B cell (primary cell): ENCODE measurements at regions of chr4 and their contacts with region 1.

Region 1: DNA sequence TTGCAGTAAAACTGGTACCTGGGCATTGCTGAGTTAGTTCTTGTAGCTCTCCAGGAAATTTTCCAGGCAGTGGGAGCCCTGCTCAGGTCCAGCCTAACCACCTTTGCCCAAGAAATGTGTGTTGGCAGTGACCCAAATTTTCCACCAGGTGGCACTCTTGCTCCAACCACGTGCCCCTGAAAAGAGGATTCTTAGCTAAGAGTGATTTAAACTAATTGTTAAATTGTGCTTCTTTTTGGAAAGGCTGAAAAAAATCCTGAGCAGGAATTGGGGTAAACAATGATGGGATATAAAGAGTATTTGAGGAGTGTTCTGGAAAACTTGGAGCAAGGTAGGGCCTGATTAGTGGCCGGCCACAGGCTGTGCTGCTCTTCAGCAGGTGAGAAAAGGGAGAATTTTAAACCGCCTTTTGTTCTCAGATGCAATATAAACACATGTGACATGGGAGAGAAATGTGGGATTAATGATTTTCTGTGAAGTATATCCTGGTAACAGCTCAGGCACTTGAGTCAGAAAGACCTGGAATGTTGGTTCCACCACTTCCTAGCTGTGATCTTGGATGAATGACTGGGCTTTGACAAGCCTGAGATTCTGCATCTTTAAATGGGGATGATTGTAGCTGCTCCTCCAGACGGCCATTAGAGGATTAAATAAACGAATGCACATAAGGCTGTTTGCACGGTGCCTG is 219.6 kb downstream of the PTTG2 start:
- DNase-seq: peak; percentile 79
- ATAC-seq: peak; percentile 80
- H3K4me3 ChIP-seq: no peak overlapping the region
- H3K4me3 Mint-ChIP-seq: no peak overlapping the region
- H3K27ac ChIP-seq: no peak overlapping the region
- H3K27ac Mint-ChIP-seq: no peak overlapping the region
- H3K4me1 ChIP-seq: peaks cover 24 to 31% of the 10 kb centered on the region in 2 donors
- H3K4me1 Mint-ChIP-seq: peaks cover 29% of the 10 kb centered on the region
- H3K27me3 ChIP-seq: peaks cover 0 to 6% (median 1%) of the 10 kb centered on the region in 4 experiments
- H3K27me3 Mint-ChIP-seq: peaks cover 6% of the 10 kb centered on the region
- CTCF ChIP-seq: peak; percentile 99

Region 2: DNA sequence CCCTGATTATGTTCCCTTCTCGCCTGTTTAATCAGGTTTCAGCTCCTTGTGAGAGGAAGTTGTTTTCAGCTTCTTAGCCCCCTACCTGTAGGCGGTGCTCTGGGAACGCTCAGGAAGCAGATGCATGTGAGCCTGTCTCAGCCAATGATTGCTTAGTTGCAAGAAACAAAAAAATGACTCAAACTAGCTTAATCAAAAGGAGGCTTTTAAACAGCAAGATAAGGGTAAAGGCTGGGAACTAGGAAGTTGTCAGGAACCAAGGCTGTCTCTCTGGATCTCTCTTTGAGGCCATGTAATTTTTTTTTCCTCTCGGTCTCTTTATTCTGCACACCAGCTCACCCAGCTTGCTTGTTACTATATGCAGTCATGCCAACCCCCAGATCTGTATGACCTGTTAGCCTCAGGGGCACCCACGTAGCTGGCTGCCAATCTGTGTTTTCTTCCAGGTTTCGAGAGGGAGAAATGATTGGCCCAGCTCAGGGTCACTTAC is 110.5 kb before region 1 on chr4:
- CTCF ChIA-PET with region 1: interaction called, 16 read pairs
- POLR2A ChIA-PET with region 1: no interaction called
- intact Hi-C with region 1: no loop called
- DNase-seq: peak; percentile 30
- ATAC-seq: no peak
- H3K4me3 ChIP-seq: no peak overlapping the region
- H3K4me3 Mint-ChIP-seq: no peak overlapping the region
- H3K27ac ChIP-seq: no peak overlapping the region
- H3K27ac Mint-ChIP-seq: no peak overlapping the region
- H3K4me1 ChIP-seq: peaks cover 0 to 12% of the 10 kb centered on the region in 2 donors
- H3K4me1 Mint-ChIP-seq: peaks cover 24% of the 10 kb centered on the region
- H3K27me3 ChIP-seq: no peaks in the 10 kb centered on the region
- H3K27me3 Mint-ChIP-seq: no peaks in the 10 kb centered on the region
- CTCF ChIP-seq: no peak

Region 3: GRCh38 chr4:38319456-38320342 is 139.9 kb after region 1 on chr4:
- CTCF ChIA-PET with region 1: interaction called, 38 read pairs
- POLR2A ChIA-PET with region 1: no interaction called
- intact Hi-C with region 1: loop called (anchors 1 kb)
- DNase-seq: peak; percentile 85
- ATAC-seq: peak; percentile 81
- H3K4me3 ChIP-seq: peak overlapping the region; percentile 43 to 74 (median 54)
- H3K4me3 Mint-ChIP-seq: peak overlapping the region; percentile 83
- H3K27ac ChIP-seq: peak overlapping the region; percentile 82 to 87
- H3K27ac Mint-ChIP-seq: peak overlapping the region; percentile 86
- H3K4me1 ChIP-seq: peaks cover 16 to 21% of the 10 kb centered on the region in 2 donors
- H3K4me1 Mint-ChIP-seq: peaks cover 29% of the 10 kb centered on the region
- H3K27me3 ChIP-seq: no peaks in the 10 kb centered on the region
- H3K27me3 Mint-ChIP-seq: no peaks in the 10 kb centered on the region
- CTCF ChIP-seq: peak; percentile 93

Region 4: GRCh38 chr4:38430841-38431240 is 251.0 kb after region 1 on chr4:
- CTCF ChIA-PET with region 1: no interaction called
- POLR2A ChIA-PET with region 1: no interaction called
- intact Hi-C with region 1: no loop called
- DNase-seq: no peak
- ATAC-seq: no peak
- H3K4me3 ChIP-seq: no peak overlapping the region
- H3K4me3 Mint-ChIP-seq: no peak overlapping the region
- H3K27ac ChIP-seq: no peak overlapping the region
- H3K27ac Mint-ChIP-seq: no peak overlapping the region
- H3K4me1 ChIP-seq: no peaks in the 10 kb centered on the region
- H3K4me1 Mint-ChIP-seq: no peaks in the 10 kb centered on the region
- H3K27me3 ChIP-seq: peaks cover 0 to 4% (median 0%) of the 10 kb centered on the region in 4 experiments
- H3K27me3 Mint-ChIP-seq: peaks cover 4% of the 10 kb centered on the region
- CTCF ChIP-seq: no peak

Region 5: DNA sequence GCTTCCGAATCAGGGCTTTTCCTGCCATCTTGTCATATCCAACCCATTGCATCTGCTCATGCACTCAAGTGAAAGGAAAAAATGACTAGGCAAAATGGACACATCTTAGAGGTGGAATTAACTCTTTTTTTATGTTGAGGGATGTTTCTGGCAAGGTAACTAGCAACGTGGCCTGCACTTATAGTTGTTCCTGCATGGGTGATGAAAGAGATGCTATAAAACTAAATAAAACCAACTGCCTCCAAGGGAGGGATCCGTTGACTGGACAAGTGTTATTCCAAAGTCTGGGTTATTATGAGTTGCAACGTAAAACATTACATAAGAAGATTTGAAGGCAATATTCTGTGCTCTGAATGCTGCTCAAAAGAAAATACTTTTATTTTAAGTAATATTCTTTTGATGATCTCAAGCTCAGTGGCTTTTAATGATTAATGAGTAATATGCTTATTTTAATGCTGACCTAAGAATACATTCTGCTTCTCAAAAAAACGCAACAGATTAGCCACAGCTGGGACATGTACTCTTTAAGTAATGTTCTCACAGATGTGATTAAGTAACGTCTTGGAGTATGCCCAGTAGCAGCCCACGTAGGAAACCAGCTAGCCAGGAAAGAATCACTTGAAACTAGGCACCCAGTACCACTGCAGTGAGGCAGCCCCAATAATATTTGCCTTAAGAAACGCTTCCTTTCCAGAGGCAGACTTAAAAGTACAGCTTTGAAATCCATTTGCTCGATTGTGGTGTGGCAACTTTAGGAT is 511.6 kb after region 1 on chr4:
- CTCF ChIA-PET with region 1: interaction called, 11 read pairs
- POLR2A ChIA-PET with region 1: no interaction called
- intact Hi-C with region 1: no loop called
- DNase-seq: no peak
- ATAC-seq: no peak
- H3K4me3 ChIP-seq: no peak overlapping the region
- H3K4me3 Mint-ChIP-seq: no peak overlapping the region
- H3K27ac ChIP-seq: no peak overlapping the region
- H3K27ac Mint-ChIP-seq: no peak overlapping the region
- H3K4me1 ChIP-seq: no peaks in the 10 kb centered on the region
- H3K4me1 Mint-ChIP-seq: no peaks in the 10 kb centered on the region
- H3K27me3 ChIP-seq: no peaks in the 10 kb centered on the region
- H3K27me3 Mint-ChIP-seq: no peaks in the 10 kb centered on the region
- CTCF ChIP-seq: no peak

Region 6: DNA sequence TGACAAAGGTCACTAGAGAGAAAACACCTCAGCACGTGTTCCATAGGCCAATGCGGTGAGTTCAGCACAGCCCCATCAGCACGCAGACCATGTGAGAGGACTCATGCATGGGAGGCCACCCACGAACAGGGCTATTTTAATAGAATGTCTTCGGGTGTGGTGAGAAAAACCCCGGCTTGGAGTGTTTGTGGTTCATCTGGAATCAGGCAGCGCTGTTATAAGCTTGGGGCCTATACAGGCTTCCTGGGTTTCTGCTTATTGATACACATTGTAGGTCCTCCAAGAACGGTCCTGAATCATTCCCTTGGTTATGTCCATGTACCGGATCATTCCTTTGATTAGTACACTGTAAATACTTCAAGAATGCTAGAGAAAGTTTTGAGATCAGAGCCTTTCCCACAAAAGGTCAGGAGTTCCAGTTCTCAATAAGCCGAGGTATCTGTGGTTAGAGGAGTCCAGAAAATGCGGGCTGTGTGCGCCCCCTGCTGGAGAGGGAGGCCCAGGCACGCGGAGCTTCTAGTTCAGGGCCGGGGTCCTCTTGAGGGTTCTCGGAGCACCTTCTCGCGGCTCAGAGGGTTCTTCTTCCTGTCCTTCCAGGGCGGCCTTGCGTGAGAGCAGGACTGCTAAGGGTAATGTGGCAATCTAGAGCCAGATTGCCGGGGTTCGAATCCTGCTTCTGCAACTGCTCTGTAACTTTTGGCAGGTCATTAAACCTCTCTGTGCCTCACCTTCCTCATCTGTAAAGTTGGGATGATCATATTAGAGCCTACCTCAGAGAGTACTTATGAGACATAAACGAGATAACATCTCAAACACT is 551.2 kb after region 1 on chr4:
- CTCF ChIA-PET with region 1: interaction called, 164 read pairs
- POLR2A ChIA-PET with region 1: interaction called, 4 read pairs
- intact Hi-C with region 1: loop called (anchors 1 kb)
- DNase-seq: peak; percentile 88
- ATAC-seq: peak; percentile 83
- H3K4me3 ChIP-seq: peak overlapping the region in 1 of 5 experiments; percentile 10
- H3K4me3 Mint-ChIP-seq: peak overlapping the region; percentile 69
- H3K27ac ChIP-seq: peak overlapping the region; percentile 32 to 40
- H3K27ac Mint-ChIP-seq: peak overlapping the region; percentile 75
- H3K4me1 ChIP-seq: peaks cover 13 to 27% of the 10 kb centered on the region in 2 donors
- H3K4me1 Mint-ChIP-seq: peaks cover 33% of the 10 kb centered on the region
- H3K27me3 ChIP-seq: no peaks in the 10 kb centered on the region
- H3K27me3 Mint-ChIP-seq: no peaks in the 10 kb centered on the region
- CTCF ChIP-seq: peak; percentile 92

Region 7: GRCh38 chr4:38856524-38857337 is 676.9 kb after region 1 on chr4 and contains the start of gene TLR6:
- CTCF ChIA-PET with region 1: interaction called, 12 read pairs
- POLR2A ChIA-PET with region 1: no interaction called
- intact Hi-C with region 1: loop called (anchors 1 kb)
- DNase-seq: peak; percentile 87
- ATAC-seq: peak; percentile 56
- H3K4me3 ChIP-seq: peak within 1 kb of the TSS; percentile 51 to 78 (median 70)
- H3K4me3 Mint-ChIP-seq: peak within 1 kb of the TSS; percentile 93
- H3K27ac ChIP-seq: peak within 1 kb of the TSS; percentile 73 to 77
- H3K27ac Mint-ChIP-seq: peak within 1 kb of the TSS; percentile 94
- H3K4me1 ChIP-seq: peaks cover 39 to 43% of the 10 kb centered on the region in 2 donors
- H3K4me1 Mint-ChIP-seq: peaks cover 52% of the 10 kb centered on the region
- H3K27me3 ChIP-seq: no peaks in the 10 kb centered on the region
- H3K27me3 Mint-ChIP-seq: no peaks in the 10 kb centered on the region
- CTCF ChIP-seq: peak; percentile 87
- total RNA-seq, gene TLR6: 54.4 and 60.6 TPM in 2 replicates